ENCODE measurements at regions of chr21 and their contacts with region 1.

Region 1: DNA sequence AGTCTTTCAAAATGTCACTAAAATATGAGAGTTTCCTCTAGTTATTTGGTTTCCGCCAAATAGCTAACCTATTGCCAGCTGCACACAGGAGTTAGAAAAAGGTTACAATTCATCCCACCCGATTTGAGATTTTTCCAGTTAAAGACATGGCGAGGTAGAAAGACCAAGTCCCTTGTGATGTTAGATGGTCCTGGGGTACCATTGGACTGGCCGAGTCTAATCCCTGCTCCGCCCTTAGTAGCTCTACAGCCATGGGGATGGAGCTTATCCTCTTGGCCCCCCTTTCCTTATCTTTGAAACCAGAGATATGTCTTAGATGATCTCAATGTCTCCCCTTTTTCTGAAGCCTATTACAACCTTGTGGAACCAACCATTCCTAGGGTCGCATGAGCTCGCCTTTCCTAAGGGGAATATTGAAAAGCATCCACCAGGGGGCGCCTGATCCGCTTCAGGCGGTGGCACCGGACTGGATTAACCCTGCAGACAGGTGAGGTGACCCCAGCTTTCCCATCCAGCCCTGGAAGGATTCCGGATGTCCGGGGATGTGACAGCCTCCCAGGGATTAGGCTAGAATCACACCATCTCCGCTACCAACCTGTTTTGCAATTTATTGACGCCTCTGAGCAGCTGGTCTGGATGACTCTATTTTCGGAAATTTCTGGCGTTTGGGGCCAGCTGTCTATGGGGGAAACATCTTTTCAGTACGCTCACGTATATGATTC is 68.3 kb upstream of the SIM2 start:
- DNase-seq: peak; percentile 80
- ATAC-seq: peak; percentile 49
- H3K4me3 ChIP-seq: no peak overlapping the region
- H3K27ac ChIP-seq: no peak overlapping the region
- H3K4me1 ChIP-seq: peaks cover 16% of the 10 kb centered on the region
- H3K27me3 ChIP-seq: no peaks in the 10 kb centered on the region
- CTCF ChIP-seq: peak; percentile 94

Region 2: GRCh38 chr21:35585155-35585554 is 1045.5 kb before region 1 on chr21:
- CTCF ChIA-PET with region 1: no interaction called
- POLR2A ChIA-PET with region 1: no interaction called
- intact Hi-C with region 1: no loop called
- DNase-seq: no peak
- ATAC-seq: no peak
- H3K4me3 ChIP-seq: no peak overlapping the region
- H3K27ac ChIP-seq: no peak overlapping the region
- H3K4me1 ChIP-seq: no peaks in the 10 kb centered on the region
- H3K27me3 ChIP-seq: no peaks in the 10 kb centered on the region
- CTCF ChIP-seq: no peak

Region 3: DNA sequence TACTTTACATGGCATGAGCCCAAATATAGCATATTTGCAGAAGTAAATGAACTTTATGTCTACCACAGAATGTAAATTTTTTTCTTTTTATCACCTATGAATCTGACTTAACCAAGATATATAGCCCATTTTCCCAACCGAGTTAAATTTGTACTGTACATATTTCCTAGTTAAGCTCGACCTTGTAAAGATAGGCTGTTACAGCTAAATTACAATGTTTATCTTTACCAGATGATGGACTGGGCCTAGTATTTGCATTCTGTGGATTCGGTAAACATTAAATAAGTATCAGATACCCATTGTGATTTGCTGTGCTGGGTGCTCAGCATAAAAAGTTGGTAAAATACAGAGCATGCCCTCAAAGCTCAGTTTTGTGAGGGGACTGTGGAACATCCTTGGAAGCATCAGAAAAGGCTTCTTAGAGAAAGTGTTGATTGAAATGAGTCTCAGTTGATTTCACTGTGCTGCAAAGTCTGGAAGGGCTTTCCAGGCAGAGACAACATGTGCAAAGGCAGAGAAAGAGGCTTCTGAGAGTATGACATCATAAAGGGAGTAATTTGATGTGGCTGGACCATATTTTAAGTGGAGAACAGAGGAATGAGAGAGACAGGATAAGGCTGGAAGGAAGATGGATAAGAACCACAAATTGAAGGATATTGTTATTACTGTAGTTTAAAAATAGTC is 283.2 kb before region 1 on chr21:
- CTCF ChIA-PET with region 1: no interaction called
- POLR2A ChIA-PET with region 1: interaction called, 11 read pairs
- intact Hi-C with region 1: no loop called
- DNase-seq: no peak
- ATAC-seq: peak; percentile 82
- H3K4me3 ChIP-seq: no peak overlapping the region
- H3K27ac ChIP-seq: no peak overlapping the region
- H3K4me1 ChIP-seq: peaks cover 10% of the 10 kb centered on the region
- H3K27me3 ChIP-seq: no peaks in the 10 kb centered on the region
- CTCF ChIP-seq: no peak

Region 4: GRCh38 chr21:36419996-36420395 is 210.7 kb before region 1 on chr21:
- CTCF ChIA-PET with region 1: interaction called, 6 read pairs
- POLR2A ChIA-PET with region 1: no interaction called
- intact Hi-C with region 1: loop called (anchors 5 kb)
- DNase-seq: peak; percentile 90
- ATAC-seq: peak; percentile 92
- H3K4me3 ChIP-seq: no peak overlapping the region
- H3K27ac ChIP-seq: no peak overlapping the region; the same call in 1 of the 2 replicates
- H3K4me1 ChIP-seq: no peaks in the 10 kb centered on the region; the same call in 1 of the 2 replicates
- H3K27me3 ChIP-seq: no peaks in the 10 kb centered on the region
- CTCF ChIP-seq: peak; percentile 88

Region 5: DNA sequence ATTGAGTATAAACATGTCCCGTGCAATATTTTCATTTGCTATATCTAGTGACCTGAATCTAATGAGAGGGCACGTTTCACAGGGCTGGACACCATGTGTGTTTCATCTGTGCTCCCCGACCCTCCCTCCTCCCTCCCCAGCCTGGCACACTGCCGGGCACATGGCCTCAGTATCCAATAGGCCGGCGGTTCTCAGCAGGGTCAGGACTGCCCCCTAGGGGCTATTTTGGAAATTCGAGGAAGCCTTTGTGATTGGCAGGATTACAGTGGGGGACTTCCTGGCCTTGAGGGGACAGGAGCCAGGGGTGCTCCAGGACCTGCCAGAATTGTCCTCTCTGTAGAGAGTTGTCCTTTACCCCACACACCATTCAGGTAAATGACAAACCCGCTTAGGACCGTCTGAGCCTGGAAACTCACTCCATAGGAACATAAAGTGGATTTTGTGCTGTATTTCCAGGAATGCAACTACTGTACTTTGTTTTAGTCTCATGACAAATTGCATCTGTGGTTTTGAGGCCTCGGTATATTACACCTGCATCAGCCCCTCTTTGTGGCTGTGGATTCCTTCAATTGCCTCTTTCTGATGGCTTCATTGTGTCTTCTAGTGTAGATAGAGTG is 41.2 kb before region 1 on chr21:
- CTCF ChIA-PET with region 1: interaction called, 5 read pairs
- POLR2A ChIA-PET with region 1: no interaction called
- intact Hi-C with region 1: loop called (anchors 10 kb)
- DNase-seq: peak; percentile 70
- ATAC-seq: no peak; the same call in 1 of the 2 replicates
- H3K4me3 ChIP-seq: no peak overlapping the region
- H3K27ac ChIP-seq: no peak overlapping the region
- H3K4me1 ChIP-seq: peaks cover 18% of the 10 kb centered on the region
- H3K27me3 ChIP-seq: no peaks in the 10 kb centered on the region
- CTCF ChIP-seq: peak; percentile 87